ENCODE measurements at regions of chr1 and their contacts with region 1.

Region 1: GRCh38 chr1:230149751-230150584 is 82.9 kb downstream of the GALNT2 start:
- DNase-seq: peak; percentile 60
- ATAC-seq: peak; percentile 86
- H3K4me3 ChIP-seq: peak overlapping the region; percentile 53
- H3K27ac ChIP-seq: peak overlapping the region; percentile 68
- H3K4me1 ChIP-seq: peaks cover 40% of the 10 kb centered on the region
- H3K27me3 ChIP-seq: no peaks in the 10 kb centered on the region
- CTCF ChIP-seq: peak in 2 of 3 experiments; percentile 17 to 35; a peak in 3 of 6 replicates
- EP300 ChIP-seq: peak; percentile 57 to 70; a peak in 2 of 4 replicates
- POLR2A ChIP-seq: no peak
- RAD21 ChIP-seq: 0 out of 2 replicates have a peak, but pooled peaks have one; percentile 27

Region 2: DNA sequence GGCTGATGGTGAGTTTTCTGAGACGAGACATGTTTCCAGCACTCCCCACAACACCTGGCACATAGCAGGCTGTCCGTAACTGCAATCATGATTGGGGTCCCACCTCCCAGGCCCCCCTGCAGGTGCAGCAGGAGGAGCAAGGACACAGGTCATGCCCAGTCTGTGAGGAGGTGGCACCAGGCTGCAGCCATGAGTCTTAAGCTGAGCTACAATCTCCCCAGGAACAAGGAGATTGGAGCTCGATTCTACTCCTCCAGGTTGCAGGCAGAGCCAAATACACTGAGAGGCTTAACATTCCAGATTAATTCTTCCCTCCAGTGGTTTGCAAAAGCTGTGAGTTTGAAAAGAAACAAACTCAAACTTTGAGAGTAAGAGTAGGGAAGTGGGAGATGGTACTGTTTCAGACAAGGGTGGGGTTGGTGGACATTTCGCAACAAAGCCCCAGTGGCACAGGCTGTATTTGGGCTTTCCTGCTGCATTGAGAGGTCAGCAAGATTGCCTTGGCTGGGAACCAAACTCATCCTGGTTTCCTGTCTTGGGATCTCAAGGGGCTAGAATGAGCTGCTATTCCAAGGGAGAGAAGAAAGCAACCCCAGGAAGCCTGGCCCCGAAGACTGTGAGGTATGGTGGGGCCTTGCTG is 147.7 kb before region 1 on chr1:
- CTCF ChIA-PET with region 1: no interaction called
- POLR2A ChIA-PET with region 1: no interaction called
- RAD21 ChIA-PET with region 1: no interaction called
- SMC1A ChIA-PET with region 1: no interaction called
- in situ Hi-C with region 1: no loop called
- intact Hi-C with region 1: no loop called
- DNase-seq: no peak
- ATAC-seq: no peak
- H3K4me3 ChIP-seq: no peak overlapping the region
- H3K27ac ChIP-seq: no peak overlapping the region
- H3K4me1 ChIP-seq: peaks cover 4% of the 10 kb centered on the region; the same call in 1 of the 2 replicates
- H3K27me3 ChIP-seq: no peaks in the 10 kb centered on the region
- CTCF ChIP-seq: no peak
- EP300 ChIP-seq: no peak
- POLR2A ChIP-seq: no peak
- RAD21 ChIP-seq: no peak

Region 3: GRCh38 chr1:230066466-230067404 is 83.2 kb before region 1 on chr1 and contains the start of gene GALNT2:
- CTCF ChIA-PET with region 1: no interaction called
- POLR2A ChIA-PET with region 1: interaction called, 3 read pairs
- RAD21 ChIA-PET with region 1: interaction called, 5 read pairs
- SMC1A ChIA-PET with region 1: interaction called, 6 read pairs
- in situ Hi-C with region 1: no loop called
- intact Hi-C with region 1: loop called (anchors 1 kb)
- DNase-seq: peak; percentile 48
- ATAC-seq: peak; percentile 83
- H3K4me3 ChIP-seq: peak within 1 kb of the TSS; percentile 96
- H3K27ac ChIP-seq: peak within 1 kb of the TSS; percentile 77
- H3K4me1 ChIP-seq: no peaks in the 10 kb centered on the region; the same call in 1 of the 2 replicates
- H3K27me3 ChIP-seq: no peaks in the 10 kb centered on the region
- CTCF ChIP-seq: no peak
- EP300 ChIP-seq: peak; percentile 36 to 56; a peak in 1 of 4 replicates
- POLR2A ChIP-seq: peak; percentile 78
- RAD21 ChIP-seq: peak; percentile 20; the same call in 1 of the 2 replicates
- polyA plus RNA-seq, gene GALNT2: 0.52 to 1.2 TPM

Region 4: DNA sequence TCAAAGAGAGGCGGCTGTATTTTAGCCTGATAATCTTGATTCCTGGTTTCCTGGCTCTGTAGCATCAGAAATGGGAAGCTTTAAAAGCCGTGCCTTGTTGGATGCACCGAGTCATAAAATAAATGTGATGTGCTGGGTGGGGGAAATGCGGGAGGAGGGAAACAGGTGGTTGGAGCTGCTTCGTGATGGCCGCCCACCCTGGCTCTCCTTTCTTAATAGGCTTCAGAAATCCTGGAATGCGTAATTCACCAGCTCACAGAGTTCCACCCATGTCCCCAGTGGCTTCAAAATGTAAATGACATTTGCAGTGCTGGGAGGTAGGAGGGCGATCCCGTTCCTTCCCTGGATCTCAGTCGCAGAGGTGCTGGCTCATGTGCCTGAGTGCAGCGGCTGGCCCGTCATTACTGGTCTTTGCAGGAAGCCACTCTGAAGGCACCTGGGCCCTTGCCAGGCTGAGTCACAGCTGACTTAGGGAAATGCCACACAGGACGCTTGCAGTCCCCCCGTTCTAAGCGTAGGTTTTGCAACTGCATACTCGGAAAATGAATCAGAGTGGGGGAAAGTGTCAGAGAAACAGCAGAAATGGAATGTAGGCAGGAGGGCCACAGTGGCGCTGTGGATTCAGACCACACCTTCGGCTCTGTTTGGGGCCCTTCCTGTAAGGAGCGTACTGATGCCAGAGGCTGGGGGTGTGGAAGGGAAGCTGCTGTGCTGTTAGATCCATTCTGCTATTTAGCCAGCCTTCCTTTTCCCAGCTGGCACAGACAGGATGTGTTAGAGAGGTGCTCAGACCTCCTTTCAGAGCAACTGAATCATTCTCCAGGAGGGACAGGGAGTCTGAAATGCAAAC is 45.3 kb before region 1 on chr1:
- CTCF ChIA-PET with region 1: interaction called, 7 read pairs
- POLR2A ChIA-PET with region 1: interaction called, 5 read pairs
- RAD21 ChIA-PET with region 1: interaction called, 20 read pairs
- SMC1A ChIA-PET with region 1: interaction called, 15 read pairs
- in situ Hi-C with region 1: no loop called
- intact Hi-C with region 1: no loop called
- DNase-seq: peak; percentile 69
- ATAC-seq: peak; percentile 84
- H3K4me3 ChIP-seq: 0 out of 2 replicates have a peak overlapping the region, but pooled peaks have one; percentile 3
- H3K27ac ChIP-seq: peak overlapping the region; percentile 63
- H3K4me1 ChIP-seq: peaks cover 53% of the 10 kb centered on the region
- H3K27me3 ChIP-seq: no peaks in the 10 kb centered on the region
- CTCF ChIP-seq: no peak
- EP300 ChIP-seq: peak in 1 of 2 experiments; percentile 16; a peak in 1 of 4 replicates
- POLR2A ChIP-seq: 0 out of 2 replicates have a peak, but pooled peaks have one; percentile 15
- RAD21 ChIP-seq: no peak

Region 5: GRCh38 chr1:230109895-230110667 is 39.9 kb before region 1 on chr1:
- CTCF ChIA-PET with region 1: interaction called, 4 read pairs
- POLR2A ChIA-PET with region 1: interaction called, 7 read pairs
- RAD21 ChIA-PET with region 1: interaction called, 20 read pairs
- SMC1A ChIA-PET with region 1: interaction called, 15 read pairs
- in situ Hi-C with region 1: no loop called
- intact Hi-C with region 1: no loop called
- DNase-seq: peak; percentile 88
- ATAC-seq: peak; percentile 90
- H3K4me3 ChIP-seq: no peak overlapping the region
- H3K27ac ChIP-seq: peak overlapping the region; percentile 64
- H3K4me1 ChIP-seq: peaks cover 57% of the 10 kb centered on the region
- H3K27me3 ChIP-seq: no peaks in the 10 kb centered on the region
- CTCF ChIP-seq: peak; percentile 27 to 49 (median 29); a peak in 4 of 6 replicates
- EP300 ChIP-seq: peak; percentile 56 to 81; a peak in 3 of 4 replicates
- POLR2A ChIP-seq: peak; percentile 64
- RAD21 ChIP-seq: peak; percentile 53

Region 6: DNA sequence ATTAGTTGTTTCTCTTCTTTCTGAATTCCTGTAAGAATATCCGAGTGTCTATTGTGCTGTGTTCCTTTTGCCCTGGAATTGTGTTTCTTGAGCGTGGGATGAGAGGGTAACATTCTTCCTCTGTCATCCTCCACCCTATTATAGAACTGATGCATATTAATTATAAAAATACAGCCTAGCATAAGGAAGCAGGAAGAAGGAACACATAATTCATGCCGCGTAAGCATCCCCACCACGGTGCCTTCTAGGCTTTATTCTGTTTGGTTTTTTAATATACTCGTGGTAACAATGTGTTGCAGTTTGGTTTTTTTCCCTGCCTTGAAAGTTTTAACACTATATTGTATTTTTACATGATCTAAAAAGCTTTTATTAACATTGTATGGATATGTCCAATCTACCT is 17.2 kb before region 1 on chr1:
- CTCF ChIA-PET with region 1: interaction called, 7 read pairs
- POLR2A ChIA-PET with region 1: interaction called, 7 read pairs
- RAD21 ChIA-PET with region 1: interaction called, 6 read pairs
- SMC1A ChIA-PET with region 1: interaction called, 22 read pairs
- in situ Hi-C with region 1: no loop called
- intact Hi-C with region 1: no loop called
- DNase-seq: no peak
- ATAC-seq: peak; percentile 40
- H3K4me3 ChIP-seq: no peak overlapping the region
- H3K27ac ChIP-seq: no peak overlapping the region; the same call in 1 of the 2 replicates
- H3K4me1 ChIP-seq: no peaks in the 10 kb centered on the region
- H3K27me3 ChIP-seq: no peaks in the 10 kb centered on the region
- CTCF ChIP-seq: no peak
- EP300 ChIP-seq: no peak
- POLR2A ChIP-seq: no peak
- RAD21 ChIP-seq: no peak

Measured in GM12878 (cell line).